ENCODE measurements at regions of chr9 and their contacts with region 1.

Region 1: GRCh38 chr9:93302551-93303257 is 118.8 kb downstream of the WNK2 start:
- DNase-seq: peak in 8 of 9 donors; percentile 39 to 76 (median 66)
- ATAC-seq: peak; percentile 82
- H3K4me3 ChIP-seq: no peak overlapping the region
- H3K4me3 Mint-ChIP-seq: no peak overlapping the region
- H3K27ac ChIP-seq: no peak overlapping the region
- H3K27ac Mint-ChIP-seq: peak overlapping the region in 1 of 9 donors; percentile 36
- H3K4me1 ChIP-seq: no peaks in the 10 kb centered on the region
- H3K4me1 Mint-ChIP-seq: peaks cover 0 to 13% (median 5%) of the 10 kb centered on the region in 7 donors
- H3K27me3 ChIP-seq: no peaks in the 10 kb centered on the region
- H3K27me3 Mint-ChIP-seq: peaks cover 0 to 3% (median 0%) of the 10 kb centered on the region in 5 donors

Region 2: DNA sequence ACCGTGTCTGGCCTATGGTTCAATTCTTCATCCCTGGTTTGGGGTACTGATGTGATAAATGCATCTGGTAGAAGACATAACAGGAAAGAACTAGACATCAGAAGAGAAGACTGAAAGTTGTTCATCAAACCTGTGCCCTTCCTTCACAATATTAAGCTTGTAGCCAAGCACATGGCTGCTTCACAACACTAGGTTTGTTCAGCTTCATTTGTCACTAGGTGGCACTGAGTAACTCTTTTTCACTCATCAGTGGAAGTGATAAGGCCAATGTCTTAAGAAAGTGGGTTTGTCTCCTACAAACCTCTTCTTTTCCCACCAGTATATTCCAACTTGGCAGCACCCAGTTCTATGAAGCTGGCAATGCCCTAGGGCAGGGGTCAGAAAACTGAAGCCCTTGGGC is 451.8 kb before region 1 on chr9:
- CTCF ChIA-PET with region 1: no interaction called
- POLR2A ChIA-PET with region 1: no interaction called
- intact Hi-C with region 1: loop called in 1 of 2 experiments (anchors 1 kb)
- DNase-seq: peak in 7 of 9 donors; percentile 22 to 46 (median 27)
- ATAC-seq: no peak
- H3K4me3 ChIP-seq: no peak overlapping the region
- H3K4me3 Mint-ChIP-seq: no peak overlapping the region
- H3K27ac ChIP-seq: no peak overlapping the region
- H3K27ac Mint-ChIP-seq: peak overlapping the region in 3 of 9 donors; percentile 8 to 84 (median 42)
- H3K4me1 ChIP-seq: peaks cover 0 to 4% of the 10 kb centered on the region in 2 donors
- H3K4me1 Mint-ChIP-seq: peaks cover 0 to 17% (median 6%) of the 10 kb centered on the region in 7 donors
- H3K27me3 ChIP-seq: no peaks in the 10 kb centered on the region
- H3K27me3 Mint-ChIP-seq: no peaks in the 10 kb centered on the region

Region 3: DNA sequence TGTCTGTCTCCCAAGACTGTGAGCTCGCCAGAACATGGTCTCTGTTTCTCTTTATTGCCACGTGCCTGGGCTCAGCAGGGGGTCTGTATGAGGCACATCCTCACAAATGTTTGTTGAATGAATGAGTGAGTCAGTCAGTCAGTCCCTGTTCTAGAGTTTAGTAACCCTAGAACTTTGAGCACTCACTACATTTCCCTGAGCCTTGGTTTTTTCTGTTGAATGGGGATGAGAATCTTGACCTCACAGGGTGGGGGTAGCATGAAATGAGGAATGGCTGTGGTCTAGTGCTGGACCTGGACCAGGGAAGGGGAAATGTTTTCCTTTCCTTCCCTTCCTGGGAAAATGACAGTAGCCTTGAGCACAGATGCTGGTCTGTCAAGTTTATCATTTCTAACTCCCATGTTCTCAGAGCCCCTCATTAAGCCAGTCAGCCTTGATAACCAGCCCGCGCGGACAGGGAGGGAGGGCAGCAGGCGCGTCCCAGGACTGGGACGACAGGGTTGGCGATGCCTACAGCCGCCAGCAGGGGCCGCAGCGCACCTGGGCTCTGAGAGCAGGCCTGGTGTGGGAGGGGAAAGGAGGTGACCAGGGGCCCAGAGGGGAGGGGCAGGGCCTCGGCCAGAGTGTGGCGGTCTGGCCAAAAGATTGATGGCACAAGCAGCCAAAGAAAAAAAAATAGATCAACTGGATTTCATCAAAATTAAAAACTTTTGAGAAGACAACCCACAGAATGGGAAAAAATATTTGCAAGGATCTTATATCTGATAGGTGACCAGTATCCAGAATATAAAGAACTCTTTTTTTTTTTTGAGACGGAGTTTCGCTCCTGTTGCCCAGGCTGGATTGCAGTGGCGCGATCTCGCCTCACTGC is 142.9 kb before region 1 on chr9:
- CTCF ChIA-PET with region 1: interaction called, 5 read pairs
- POLR2A ChIA-PET with region 1: no interaction called
- intact Hi-C with region 1: loop called in 1 of 2 experiments (anchors 1 kb)
- DNase-seq: peak; percentile 35 to 82 (median 52)
- ATAC-seq: peak; percentile 95
- H3K4me3 ChIP-seq: no peak overlapping the region
- H3K4me3 Mint-ChIP-seq: peak overlapping the region in 1 of 10 donors; percentile 16
- H3K27ac ChIP-seq: no peak overlapping the region
- H3K27ac Mint-ChIP-seq: peak overlapping the region in 3 of 9 donors; percentile 40 to 72 (median 43)
- H3K4me1 ChIP-seq: peaks cover 0 to 5% of the 10 kb centered on the region in 2 donors
- H3K4me1 Mint-ChIP-seq: peaks cover 0 to 24% (median 8%) of the 10 kb centered on the region in 7 donors
- H3K27me3 ChIP-seq: no peaks in the 10 kb centered on the region
- H3K27me3 Mint-ChIP-seq: no peaks in the 10 kb centered on the region

Measured in naive thymus-derived CD4-positive, alpha-beta T cell (primary cell).